Endothelial cell of umbilical vein (primary cell): ENCODE measurements at regions of chr16 and their contacts with region 1.

Region 1: GRCh38 chr16:72832621-72833248 is 215.2 kb downstream of the ZFHX3 start:
- DNase-seq: peak; percentile 78
- H3K4me3 ChIP-seq: no peak overlapping the region
- H3K27ac ChIP-seq: no peak overlapping the region
- H3K4me1 ChIP-seq: no peaks in the 10 kb centered on the region
- H3K27me3 ChIP-seq: no peaks in the 10 kb centered on the region
- CTCF ChIP-seq: peak; percentile 97 to 99
- POLR2A ChIP-seq: no peak

Region 2: GRCh38 chr16:72501739-72502593 is 330.8 kb before region 1 on chr16:
- CTCF ChIA-PET with region 1: interaction called, 14 read pairs
- POLR2A ChIA-PET with region 1: no interaction called
- dilution Hi-C with region 1: no loop called
- intact Hi-C with region 1: loop called (anchors 1 kb)
- DNase-seq: peak; percentile 88
- H3K4me3 ChIP-seq: no peak overlapping the region
- H3K27ac ChIP-seq: no peak overlapping the region
- H3K4me1 ChIP-seq: no peaks in the 10 kb centered on the region
- H3K27me3 ChIP-seq: no peaks in the 10 kb centered on the region
- CTCF ChIP-seq: peak; percentile 68 to 75
- POLR2A ChIP-seq: no peak

Region 3: DNA sequence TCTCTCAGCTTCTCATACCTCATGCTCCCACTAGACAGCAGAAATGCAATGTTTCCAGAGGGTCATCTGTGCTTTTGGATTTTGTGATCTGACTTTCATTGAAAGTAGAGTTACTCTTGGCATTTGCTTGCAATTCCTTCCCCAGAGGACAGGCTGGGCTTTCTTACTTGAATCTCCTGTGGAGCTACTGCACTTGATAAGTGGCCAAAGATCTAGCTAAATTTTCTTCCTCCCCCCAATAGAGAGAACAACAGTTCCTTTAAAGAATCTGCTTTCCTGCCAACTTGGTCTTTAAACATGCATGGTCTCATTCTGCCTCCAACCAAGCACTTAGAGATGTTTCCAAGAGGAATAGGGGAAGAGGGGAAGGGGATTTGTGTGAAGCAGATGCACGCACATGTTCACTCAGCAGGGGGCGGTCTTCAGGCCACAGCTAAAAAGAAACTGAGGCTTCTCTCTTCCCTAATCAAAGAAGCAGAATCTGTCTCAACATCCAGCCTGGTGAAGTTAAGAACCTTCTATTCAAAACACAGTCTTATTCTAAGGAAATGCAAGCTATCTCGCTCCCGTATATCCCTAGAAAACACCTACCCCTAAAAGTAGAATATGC is 14.4 kb before region 1 on chr16:
- CTCF ChIA-PET with region 1: interaction called, 18 read pairs
- POLR2A ChIA-PET with region 1: no interaction called
- dilution Hi-C with region 1: no loop called
- intact Hi-C with region 1: no loop called
- DNase-seq: no peak
- H3K4me3 ChIP-seq: no peak overlapping the region
- H3K27ac ChIP-seq: no peak overlapping the region
- H3K4me1 ChIP-seq: no peaks in the 10 kb centered on the region
- H3K27me3 ChIP-seq: no peaks in the 10 kb centered on the region
- CTCF ChIP-seq: peak; percentile 5 to 13
- POLR2A ChIP-seq: no peak

Region 4: GRCh38 chr16:72876221-72876620 is 43.5 kb after region 1 on chr16:
- CTCF ChIA-PET with region 1: interaction called, 20 read pairs
- POLR2A ChIA-PET with region 1: no interaction called
- dilution Hi-C with region 1: no loop called
- intact Hi-C with region 1: no loop called
- DNase-seq: peak; percentile 67
- H3K4me3 ChIP-seq: no peak overlapping the region
- H3K27ac ChIP-seq: peak overlapping the region; percentile 92
- H3K4me1 ChIP-seq: peaks cover 31% of the 10 kb centered on the region
- H3K27me3 ChIP-seq: no peaks in the 10 kb centered on the region
- CTCF ChIP-seq: no peak
- POLR2A ChIP-seq: no peak

Region 5: DNA sequence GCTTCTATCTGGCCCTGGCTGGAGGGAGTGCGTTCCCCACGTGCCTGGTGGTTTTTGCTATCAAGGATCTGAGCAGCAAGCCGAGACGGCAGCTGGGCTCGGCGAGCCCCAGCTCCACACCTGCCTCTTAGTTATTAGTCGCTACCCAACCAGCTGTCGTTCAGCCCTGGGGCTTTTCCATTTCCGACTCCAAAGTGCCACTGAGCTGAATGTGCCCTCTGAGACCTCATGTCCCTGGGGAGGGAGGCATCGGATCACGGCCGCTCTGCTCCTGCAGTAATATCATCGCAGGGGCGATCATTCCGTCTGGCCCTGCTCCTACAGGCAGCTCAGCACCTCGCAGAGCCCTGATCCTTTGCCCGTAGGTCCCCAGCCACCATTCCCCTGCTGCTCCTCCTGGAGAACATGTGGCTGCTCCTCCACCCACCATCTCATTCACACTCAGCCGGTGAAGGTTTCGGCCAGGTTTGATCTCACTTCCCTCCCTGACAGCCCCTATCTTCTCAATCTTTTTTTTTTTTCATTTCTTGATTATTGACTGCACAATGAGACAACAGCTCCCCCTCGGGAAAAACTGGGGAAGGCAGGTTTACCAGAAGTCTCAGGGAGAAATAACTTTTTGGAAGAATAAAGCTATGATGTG is 128.5 kb after region 1 on chr16:
- CTCF ChIA-PET with region 1: interaction called, 41 read pairs
- POLR2A ChIA-PET with region 1: no interaction called
- dilution Hi-C with region 1: no loop called
- intact Hi-C with region 1: no loop called
- DNase-seq: no peak
- H3K4me3 ChIP-seq: no peak overlapping the region
- H3K27ac ChIP-seq: no peak overlapping the region
- H3K4me1 ChIP-seq: no peaks in the 10 kb centered on the region
- H3K27me3 ChIP-seq: no peaks in the 10 kb centered on the region
- CTCF ChIP-seq: peak; percentile 16 to 20
- POLR2A ChIP-seq: no peak

Region 6: DNA sequence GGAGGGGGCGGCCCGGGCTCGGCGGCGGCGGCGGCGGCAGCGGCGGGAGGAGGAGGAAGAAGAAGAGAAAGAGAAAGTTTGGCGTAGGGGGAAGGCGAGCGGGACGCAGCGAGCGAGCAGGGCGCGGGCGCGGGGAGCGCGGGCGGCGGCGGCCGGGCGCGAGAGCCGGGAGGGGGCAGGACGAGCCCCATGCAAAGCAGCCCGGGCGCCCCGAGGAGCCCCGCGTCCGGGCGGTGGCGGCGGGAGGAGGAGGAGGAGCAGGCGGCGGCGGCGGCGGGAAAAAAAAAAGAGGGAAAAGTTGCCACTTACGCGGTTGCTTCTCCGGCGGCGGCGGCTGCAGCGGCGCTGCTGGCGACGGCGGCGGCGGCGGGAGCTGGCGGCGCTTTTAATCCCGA is 225.5 kb after region 1 on chr16:
- CTCF ChIA-PET with region 1: interaction called, 55 read pairs
- POLR2A ChIA-PET with region 1: no interaction called
- dilution Hi-C with region 1: no loop called
- intact Hi-C with region 1: loop called (anchors 2 kb)
- DNase-seq: peak; percentile 45
- H3K4me3 ChIP-seq: peak overlapping the region; percentile 35 to 94 (median 49)
- H3K27ac ChIP-seq: peak overlapping the region; percentile 65
- H3K4me1 ChIP-seq: peaks cover 61% of the 10 kb centered on the region
- H3K27me3 ChIP-seq: no peaks in the 10 kb centered on the region
- CTCF ChIP-seq: no peak
- POLR2A ChIP-seq: no peak

Region 7: GRCh38 chr16:73196670-73197069 is 363.9 kb after region 1 on chr16:
- CTCF ChIA-PET with region 1: interaction called, 50 read pairs
- POLR2A ChIA-PET with region 1: no interaction called
- dilution Hi-C with region 1: no loop called
- intact Hi-C with region 1: loop called (anchors 1 kb)
- DNase-seq: peak; percentile 78
- H3K4me3 ChIP-seq: no peak overlapping the region
- H3K27ac ChIP-seq: no peak overlapping the region
- H3K4me1 ChIP-seq: no peaks in the 10 kb centered on the region
- H3K27me3 ChIP-seq: peaks cover 5 to 10% of the 10 kb centered on the region in 2 experiments
- CTCF ChIP-seq: peak; percentile 56 to 60
- POLR2A ChIP-seq: no peak